ENCODE measurements at regions of chr22 and their contacts with region 1.

Region 1: GRCh38 chr22:42070517-42071422 is at the start of gene NAGA:
- DNase-seq: peak; percentile 97
- H3K4me3 ChIP-seq: peak within 1 kb of the TSS; percentile 36 to 78 (median 56)
- H3K27ac ChIP-seq: peak within 1 kb of the TSS; percentile 86 to 96 (median 93)
- H3K4me1 ChIP-seq: peaks cover 21 to 40% (median 31%) of the 10 kb centered on the region in 4 donors
- H3K27me3 ChIP-seq: no peaks in the 10 kb centered on the region
- CTCF ChIP-seq: no peak
- EP300 ChIP-seq: no peak
- POLR2A ChIP-seq: peak; percentile 90
- total RNA-seq, gene NAGA: 48.3 to 120 (median 96.0) TPM

Region 2: GRCh38 chr22:42090596-42091454 is 20.1 kb after region 1 on chr22 and contains the start of gene NDUFA6:
- in situ Hi-C with region 1: no loop called
- intact Hi-C with region 1: loop called (anchors 1 kb)
- DNase-seq: peak; percentile 99
- H3K4me3 ChIP-seq: peak within 1 kb of the TSS; percentile 66 to 78 (median 74)
- H3K27ac ChIP-seq: peak within 1 kb of the TSS; percentile 93 to 98 (median 96)
- H3K4me1 ChIP-seq: peaks cover 15 to 28% (median 19%) of the 10 kb centered on the region in 4 donors
- H3K27me3 ChIP-seq: no peaks in the 10 kb centered on the region
- CTCF ChIP-seq: peak; percentile 84 to 100 (median 91)
- EP300 ChIP-seq: no peak
- POLR2A ChIP-seq: peak; percentile 99
- total RNA-seq, gene NDUFA6: 17.2 to 723 (median 88.7) TPM

Region 3: DNA sequence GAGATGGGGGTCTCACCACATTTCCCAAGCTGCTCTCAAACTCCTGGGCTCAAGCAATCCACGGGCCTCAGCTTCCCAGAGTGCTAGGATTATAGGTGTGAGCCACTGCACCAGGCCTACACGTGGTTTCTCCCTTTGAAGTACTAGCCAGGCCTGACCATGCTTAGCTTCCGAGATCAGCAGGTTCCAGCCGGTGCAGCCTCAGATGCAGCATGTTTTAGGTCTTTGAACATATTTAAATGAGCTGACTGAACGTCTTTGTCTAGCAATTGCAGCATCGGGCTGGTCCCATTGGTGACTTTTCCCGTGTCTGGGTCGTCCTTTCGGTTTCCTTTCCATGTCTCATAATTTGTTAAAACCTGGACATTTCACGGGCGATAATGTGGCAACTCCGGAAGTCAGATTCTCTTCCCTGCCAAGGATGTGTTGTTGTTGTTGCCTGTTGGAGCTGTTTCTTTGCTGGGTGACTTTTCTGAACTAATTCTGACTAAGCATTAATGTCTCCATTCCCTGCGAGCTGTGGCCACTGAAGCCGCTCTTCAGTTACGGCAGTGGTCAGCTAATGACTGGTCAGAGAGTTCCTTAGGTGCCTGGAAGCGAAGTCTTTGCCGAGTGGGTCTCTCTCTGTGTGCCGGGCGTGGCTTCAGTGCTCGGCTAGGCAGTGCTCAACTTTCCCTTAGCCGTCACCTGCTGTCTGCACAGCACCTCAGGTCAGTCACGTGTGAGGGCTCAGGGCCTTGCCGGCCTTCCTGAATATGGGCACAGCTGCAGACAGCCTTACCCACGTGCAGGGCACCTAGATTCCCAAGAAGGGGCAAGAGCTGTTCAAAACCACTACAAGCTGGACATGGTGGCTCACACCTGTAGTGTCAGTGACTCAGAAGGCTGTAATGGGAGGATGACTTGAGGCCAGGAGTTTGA is 63.6 kb after region 1 on chr22:
- in situ Hi-C with region 1: no loop called
- intact Hi-C with region 1: no loop called
- DNase-seq: no peak
- H3K4me3 ChIP-seq: no peak overlapping the region
- H3K27ac ChIP-seq: no peak overlapping the region
- H3K4me1 ChIP-seq: peaks cover 0 to 4% (median 0%) of the 10 kb centered on the region in 4 donors
- H3K27me3 ChIP-seq: no peaks in the 10 kb centered on the region
- CTCF ChIP-seq: no peak
- EP300 ChIP-seq: no peak
- POLR2A ChIP-seq: no peak

Region 4: DNA sequence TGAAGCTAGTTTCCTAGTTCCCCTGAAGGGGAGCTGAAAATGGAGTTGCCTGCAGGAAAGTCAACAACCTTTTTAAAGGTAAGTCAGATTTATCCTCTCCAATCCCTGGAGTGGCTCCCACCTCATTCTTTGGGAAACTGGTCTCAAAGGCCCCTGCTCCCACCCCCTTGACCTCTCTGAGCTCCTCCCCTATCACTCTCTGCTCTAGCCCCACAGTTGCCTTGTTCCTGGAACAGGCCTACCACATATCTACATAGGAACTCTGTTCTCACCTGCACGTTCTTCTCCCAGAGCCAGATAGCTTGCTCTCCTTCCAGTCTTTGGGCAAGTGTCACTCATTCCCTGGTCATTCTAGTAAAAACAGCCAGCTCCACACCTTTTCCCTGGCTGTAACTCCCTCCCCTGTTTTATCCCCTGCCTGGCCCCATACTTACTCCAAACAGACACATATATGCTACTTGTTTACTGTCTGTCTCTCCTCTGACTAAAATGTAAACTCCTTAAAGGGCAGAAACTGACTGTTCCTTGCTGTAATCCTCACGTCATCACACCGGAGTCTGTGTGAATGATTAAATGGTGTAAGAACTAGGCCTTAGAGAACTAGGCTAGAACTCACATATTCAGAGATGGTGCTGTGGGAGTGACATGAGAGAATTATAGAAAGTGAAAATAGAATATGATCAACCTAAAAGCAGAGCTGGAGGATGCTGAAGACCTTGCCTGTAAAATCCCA is 146.4 kb after region 1 on chr22:
- in situ Hi-C with region 1: no loop called
- intact Hi-C with region 1: no loop called
- DNase-seq: no peak
- H3K4me3 ChIP-seq: no peak overlapping the region
- H3K27ac ChIP-seq: no peak overlapping the region
- H3K4me1 ChIP-seq: peaks cover 6 to 23% (median 8%) of the 10 kb centered on the region in 4 donors
- H3K27me3 ChIP-seq: no peaks in the 10 kb centered on the region
- CTCF ChIP-seq: no peak
- EP300 ChIP-seq: no peak
- POLR2A ChIP-seq: no peak

Measured in transverse colon (tissue), 4 donors.